HepG2 (cell line): ENCODE measurements at regions of chr22 and their contacts with region 1.

Region 1: GRCh38 chr22:46267431-46268279 is at the start of gene TTC38:
- DNase-seq: peak; percentile 90
- ATAC-seq: peak; percentile 94
- H3K4me3 ChIP-seq: peak within 1 kb of the TSS; percentile 79 to 99 (median 99)
- H3K27ac ChIP-seq: peak within 1 kb of the TSS; percentile 98
- H3K4me1 ChIP-seq: peaks cover 45% of the 10 kb centered on the region
- H3K27me3 ChIP-seq: peaks cover 0 to 3% of the 10 kb centered on the region in 2 experiments; a peak in 1 of 5 replicates
- CTCF ChIP-seq: 0 out of 2 replicates have a peak, but pooled peaks have one; percentile 5
- EP300 ChIP-seq: peak in 1 of 2 experiments; percentile 21; a peak in 1 of 4 replicates
- POLR2A ChIP-seq: peak; percentile 80 to 93
- RAD21 ChIP-seq: no peak
- total RNA-seq, gene TTC38: 105 and 106 TPM in 2 replicates

Region 2: DNA sequence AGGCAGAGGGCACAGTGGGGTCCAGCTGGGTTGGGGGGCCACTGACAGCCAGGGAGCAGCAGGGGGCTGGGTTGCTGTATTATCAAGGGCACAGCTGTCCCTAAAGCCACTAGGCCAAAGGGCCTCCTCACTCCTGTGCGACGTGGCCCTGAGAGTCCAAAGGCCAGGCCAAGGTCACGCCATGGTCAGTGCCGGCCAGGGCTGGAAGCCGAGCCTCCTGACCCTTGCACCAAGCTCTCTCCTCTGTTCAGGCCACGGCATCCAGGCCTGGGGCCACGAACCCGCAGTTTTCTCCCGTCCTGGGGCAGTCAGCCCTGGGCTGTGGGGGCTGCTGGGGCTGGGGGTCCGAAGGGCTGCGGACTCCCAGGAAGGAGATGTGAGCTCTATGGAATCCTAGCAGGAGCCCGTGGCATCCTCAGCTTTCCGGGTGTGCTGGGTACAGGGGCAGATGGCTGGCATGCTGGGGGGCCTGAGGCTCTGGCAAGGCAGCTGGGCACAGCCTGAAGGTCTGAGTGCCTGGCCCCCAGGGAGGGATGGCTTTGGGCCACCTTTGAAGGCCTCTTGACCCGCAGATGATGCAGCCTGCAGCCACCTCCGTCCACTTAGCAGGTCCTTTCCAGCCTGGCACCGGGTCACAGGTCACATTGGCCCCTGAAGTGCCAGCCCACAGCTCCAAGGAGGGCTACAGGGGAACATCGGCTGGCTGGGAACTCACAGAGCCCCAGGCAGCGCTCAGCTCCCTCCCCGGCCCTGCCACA is 134.6 kb before region 1 on chr22:
- CTCF ChIA-PET with region 1: no interaction called
- POLR2A ChIA-PET with region 1: interaction called, 16 read pairs
- in situ Hi-C with region 1: no loop called
- intact Hi-C with region 1: no loop called
- DNase-seq: peak; percentile 43
- ATAC-seq: peak; percentile 42
- H3K4me3 ChIP-seq: peak overlapping the region in 1 of 3 experiments; percentile 40; a peak in 1 of 6 replicates
- H3K27ac ChIP-seq: peak overlapping the region; percentile 48
- H3K4me1 ChIP-seq: peaks cover 91% of the 10 kb centered on the region
- H3K27me3 ChIP-seq: peaks cover 0 to 4% of the 10 kb centered on the region in 2 experiments; a peak in 4 of 5 replicates
- CTCF ChIP-seq: peak; percentile 41; the same call in 1 of the 2 replicates
- EP300 ChIP-seq: peak in 1 of 2 experiments; percentile 42; a peak in 1 of 4 replicates
- POLR2A ChIP-seq: no peak
- RAD21 ChIP-seq: no peak

Region 3: GRCh38 chr22:46150034-46150654 is 117.5 kb before region 1 on chr22 and contains the start of gene PPARA:
- CTCF ChIA-PET with region 1: no interaction called
- POLR2A ChIA-PET with region 1: interaction called, 40 read pairs
- in situ Hi-C with region 1: no loop called
- intact Hi-C with region 1: no loop called
- DNase-seq: peak; percentile 46
- ATAC-seq: peak; percentile 45
- H3K4me3 ChIP-seq: peak within 1 kb of the TSS; percentile 89 to 96 (median 95)
- H3K27ac ChIP-seq: peak within 1 kb of the TSS; percentile 77
- H3K4me1 ChIP-seq: peaks cover 49% of the 10 kb centered on the region
- H3K27me3 ChIP-seq: no peaks in the 10 kb centered on the region
- CTCF ChIP-seq: no peak
- EP300 ChIP-seq: no peak
- POLR2A ChIP-seq: no peak
- RAD21 ChIP-seq: 0 out of 2 replicates have a peak, but pooled peaks have one; percentile 19
- total RNA-seq, gene PPARA: 24.7 and 32.0 TPM in 2 replicates

Region 4: DNA sequence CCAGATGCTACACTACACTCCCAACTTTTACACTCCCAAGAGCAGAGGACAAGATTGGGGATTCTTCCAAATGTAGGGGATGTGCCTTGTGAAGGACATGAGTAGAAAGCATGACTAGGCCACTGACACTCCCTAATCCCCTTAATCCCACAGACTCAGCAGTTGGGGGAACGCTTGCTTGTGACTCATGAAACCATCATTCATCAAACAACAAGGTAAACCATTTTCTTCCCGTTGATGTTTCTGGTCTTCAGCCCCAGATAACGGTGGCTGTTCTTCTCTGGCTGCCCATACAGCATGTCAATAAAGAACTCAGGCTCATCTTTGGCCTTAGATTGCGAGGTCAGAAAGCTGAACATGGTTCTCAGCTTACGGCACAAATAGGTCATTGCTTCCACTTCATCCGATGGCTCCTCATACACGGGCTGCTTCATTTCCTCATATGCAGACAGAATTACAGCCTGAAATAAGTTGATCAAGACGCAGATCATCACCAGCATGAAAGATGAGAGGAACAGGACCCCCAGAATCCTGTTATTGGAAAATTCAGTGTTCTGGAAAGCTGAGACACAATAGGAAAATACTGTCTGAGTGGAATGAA is 11.2 kb before region 1 on chr22:
- CTCF ChIA-PET with region 1: no interaction called
- POLR2A ChIA-PET with region 1: interaction called, 83 read pairs
- in situ Hi-C with region 1: no loop called
- intact Hi-C with region 1: loop called (anchors 2 kb)
- DNase-seq: peak; percentile 10
- ATAC-seq: peak; percentile 38; the same call in 2 of the 3 replicates
- H3K4me3 ChIP-seq: no peak overlapping the region
- H3K27ac ChIP-seq: no peak overlapping the region
- H3K4me1 ChIP-seq: peaks cover 43% of the 10 kb centered on the region
- H3K27me3 ChIP-seq: no peaks in the 10 kb centered on the region
- CTCF ChIP-seq: no peak
- EP300 ChIP-seq: no peak
- POLR2A ChIP-seq: no peak
- RAD21 ChIP-seq: no peak

Region 5: GRCh38 chr22:46287873-46288751 is 20.5 kb after region 1 on chr22:
- CTCF ChIA-PET with region 1: no interaction called
- POLR2A ChIA-PET with region 1: interaction called, 33 read pairs
- in situ Hi-C with region 1: no loop called
- intact Hi-C with region 1: no loop called
- DNase-seq: no peak
- ATAC-seq: peak; percentile 16
- H3K4me3 ChIP-seq: no peak overlapping the region
- H3K27ac ChIP-seq: no peak overlapping the region
- H3K4me1 ChIP-seq: no peaks in the 10 kb centered on the region
- H3K27me3 ChIP-seq: no peaks in the 10 kb centered on the region
- CTCF ChIP-seq: no peak
- EP300 ChIP-seq: no peak
- POLR2A ChIP-seq: no peak
- RAD21 ChIP-seq: no peak

Region 6: DNA sequence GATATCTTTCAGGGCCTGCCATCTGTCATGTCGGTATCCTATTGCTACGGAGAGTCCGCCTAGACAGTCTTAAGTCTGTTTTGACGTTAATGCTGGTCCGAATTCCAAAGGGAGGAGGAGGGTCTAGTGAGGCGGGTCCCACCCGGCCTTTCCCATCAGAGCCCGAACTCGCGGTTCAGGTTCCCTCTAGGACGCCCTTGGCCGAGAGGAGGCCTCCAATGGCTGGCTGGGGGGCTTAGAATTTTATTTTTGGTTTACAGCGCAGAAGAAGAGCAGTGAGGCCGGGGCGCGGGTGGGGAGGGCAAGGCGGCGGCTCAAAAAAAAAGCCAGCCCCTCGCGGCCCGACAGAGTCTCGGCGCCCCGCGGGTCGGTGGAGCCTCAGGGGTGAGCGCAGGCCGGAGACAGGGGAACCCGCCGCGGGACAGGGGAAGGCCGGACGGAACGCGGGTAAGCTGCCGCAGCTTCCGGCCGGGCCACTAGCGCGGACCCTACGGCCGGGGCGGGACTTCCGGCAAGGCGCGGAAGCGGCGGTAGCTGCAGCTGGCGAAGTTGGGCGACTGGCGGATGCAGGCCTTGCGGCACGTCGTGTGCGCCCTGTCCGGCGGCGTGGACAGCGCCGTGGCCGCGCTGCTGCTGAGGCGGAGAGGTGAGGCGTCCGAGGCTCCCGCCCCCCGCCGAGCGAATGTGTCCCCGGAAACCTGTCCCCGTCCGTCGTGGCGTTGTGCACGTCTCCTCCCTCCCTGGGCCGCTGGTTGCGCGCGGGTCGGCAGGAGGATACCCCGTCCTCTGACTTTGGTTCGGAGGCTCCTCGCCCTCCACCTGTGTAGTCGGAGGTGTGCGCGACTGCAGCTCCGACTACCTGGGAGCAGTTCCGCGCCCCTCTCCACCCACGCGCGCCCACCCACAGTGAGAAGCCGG is 67.8 kb after region 1 on chr22 and contains the start of gene TRMU:
- CTCF ChIA-PET with region 1: no interaction called
- POLR2A ChIA-PET with region 1: interaction called, 12 read pairs
- in situ Hi-C with region 1: no loop called
- intact Hi-C with region 1: no loop called
- DNase-seq: peak; percentile 71
- ATAC-seq: peak; percentile 97
- H3K4me3 ChIP-seq: peak within 1 kb of the TSS; percentile 72 to 100 (median 98)
- H3K27ac ChIP-seq: peak within 1 kb of the TSS; percentile 84
- H3K4me1 ChIP-seq: peaks cover 40% of the 10 kb centered on the region
- H3K27me3 ChIP-seq: no peaks in the 10 kb centered on the region
- CTCF ChIP-seq: peak; percentile 28; the same call in 1 of the 2 replicates
- EP300 ChIP-seq: 0 out of 4 replicates have a peak, but pooled peaks of 1 of the 2 experiments have one; percentile 37
- POLR2A ChIP-seq: peak; percentile 83 to 85
- RAD21 ChIP-seq: peak; percentile 65
- total RNA-seq, gene TRMU: 47.7 and 50.2 TPM in 2 replicates